CD8-positive, alpha-beta T cell (primary cell): ENCODE measurements at regions of chr9 and their contacts with region 1.

Region 1: GRCh38 chr9:86282077-86282978 is at the start of gene ISCA1:
- DNase-seq: peak; percentile 97 to 100 (median 99)
- ATAC-seq: peak; percentile 82
- H3K4me3 ChIP-seq: peak within 1 kb of the TSS; percentile 62 to 69
- H3K4me3 Mint-ChIP-seq: peak within 1 kb of the TSS; percentile 90
- H3K27ac ChIP-seq: peak within 1 kb of the TSS; percentile 87 to 89
- H3K27ac Mint-ChIP-seq: peak within 1 kb of the TSS; percentile 94
- H3K4me1 ChIP-seq: peaks cover 32% of the 10 kb centered on the region
- H3K4me1 Mint-ChIP-seq: peaks cover 44% of the 10 kb centered on the region
- H3K27me3 ChIP-seq: no peaks in the 10 kb centered on the region
- H3K27me3 Mint-ChIP-seq: no peaks in the 10 kb centered on the region
- CTCF ChIP-seq: no peak
- total RNA-seq, gene ISCA1: 116 to 119 TPM

Region 2: GRCh38 chr9:85741875-85742629 is 540.3 kb before region 1 on chr9 and contains the start of gene AGTPBP1:
- CTCF ChIA-PET with region 1: no interaction called
- POLR2A ChIA-PET with region 1: interaction called, 6 read pairs
- intact Hi-C with region 1: loop called (anchors 2 kb)
- DNase-seq: peak; percentile 90 to 99 (median 97)
- ATAC-seq: peak; percentile 85
- H3K4me3 ChIP-seq: peak within 1 kb of the TSS; percentile 78 to 89
- H3K4me3 Mint-ChIP-seq: peak within 1 kb of the TSS; percentile 96
- H3K27ac ChIP-seq: peak within 1 kb of the TSS; percentile 83 to 93
- H3K27ac Mint-ChIP-seq: peak within 1 kb of the TSS; percentile 98
- H3K4me1 ChIP-seq: peaks cover 12% of the 10 kb centered on the region
- H3K4me1 Mint-ChIP-seq: peaks cover 40% of the 10 kb centered on the region
- H3K27me3 ChIP-seq: no peaks in the 10 kb centered on the region
- H3K27me3 Mint-ChIP-seq: no peaks in the 10 kb centered on the region
- CTCF ChIP-seq: no peak
- total RNA-seq, gene AGTPBP1: 58.3 to 58.4 TPM

Region 3: DNA sequence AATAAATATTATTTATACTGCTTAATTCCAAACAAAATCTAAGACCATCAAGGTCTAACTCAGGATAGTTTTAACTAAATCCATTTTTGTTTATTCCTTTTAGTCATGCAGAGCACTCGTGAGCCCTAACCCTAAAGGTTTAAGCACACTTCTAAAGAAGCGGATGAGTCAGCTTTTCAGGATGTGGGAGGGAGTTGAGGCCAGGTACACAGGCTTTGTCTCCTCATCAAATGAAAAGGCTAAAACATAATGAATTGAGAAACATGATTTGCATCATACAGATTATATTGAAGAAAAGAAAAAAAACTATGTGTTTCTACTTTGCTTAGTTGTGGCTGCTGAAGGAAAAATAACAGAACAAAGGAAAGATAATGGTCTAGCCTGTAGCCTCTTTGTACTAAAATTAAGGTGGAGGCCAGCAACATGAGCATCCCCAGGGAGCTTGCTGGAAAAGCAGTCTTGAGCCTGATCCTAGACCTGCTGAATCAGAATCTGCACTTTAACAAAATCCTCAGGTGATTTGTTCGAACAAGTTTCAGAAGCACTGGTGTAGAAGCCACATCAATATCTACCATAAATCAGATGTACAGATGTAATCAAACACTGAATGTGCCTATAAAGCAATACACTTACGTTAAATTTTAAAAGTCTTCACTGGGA is 21.1 kb after region 1 on chr9:
- CTCF ChIA-PET with region 1: no interaction called
- POLR2A ChIA-PET with region 1: interaction called, 7 read pairs
- intact Hi-C with region 1: loop called (anchors 1 to 2 kb)
- DNase-seq: peak in 8 of 9 experiments; percentile 7 to 56 (median 42)
- ATAC-seq: peak; percentile 95
- H3K4me3 ChIP-seq: no peak overlapping the region
- H3K4me3 Mint-ChIP-seq: no peak overlapping the region
- H3K27ac ChIP-seq: no peak overlapping the region
- H3K27ac Mint-ChIP-seq: peak overlapping the region; percentile 72
- H3K4me1 ChIP-seq: peaks cover 8% of the 10 kb centered on the region
- H3K4me1 Mint-ChIP-seq: peaks cover 17% of the 10 kb centered on the region
- H3K27me3 ChIP-seq: no peaks in the 10 kb centered on the region
- H3K27me3 Mint-ChIP-seq: no peaks in the 10 kb centered on the region
- CTCF ChIP-seq: no peak

Region 4: GRCh38 chr9:86337469-86338108 is 55.3 kb after region 1 on chr9:
- CTCF ChIA-PET with region 1: no interaction called
- POLR2A ChIA-PET with region 1: no interaction called
- intact Hi-C with region 1: loop called in 1 of 2 experiments (anchors 5 kb)
- DNase-seq: peak in 2 of 9 experiments; percentile 42 to 67
- ATAC-seq: peak; percentile 39
- H3K4me3 ChIP-seq: peak overlapping the region; percentile 34 to 36
- H3K4me3 Mint-ChIP-seq: peak overlapping the region; percentile 83
- H3K27ac ChIP-seq: peak overlapping the region; percentile 35 to 68
- H3K27ac Mint-ChIP-seq: peak overlapping the region; percentile 87
- H3K4me1 ChIP-seq: peaks cover 18% of the 10 kb centered on the region
- H3K4me1 Mint-ChIP-seq: peaks cover 44% of the 10 kb centered on the region
- H3K27me3 ChIP-seq: no peaks in the 10 kb centered on the region
- H3K27me3 Mint-ChIP-seq: no peaks in the 10 kb centered on the region
- CTCF ChIP-seq: no peak

Region 5: GRCh38 chr9:86405926-86406325 is 123.6 kb after region 1 on chr9:
- CTCF ChIA-PET with region 1: no interaction called
- POLR2A ChIA-PET with region 1: no interaction called
- intact Hi-C with region 1: no loop called
- DNase-seq: no peak
- ATAC-seq: no peak
- H3K4me3 ChIP-seq: no peak overlapping the region
- H3K4me3 Mint-ChIP-seq: no peak overlapping the region
- H3K27ac ChIP-seq: no peak overlapping the region
- H3K27ac Mint-ChIP-seq: no peak overlapping the region
- H3K4me1 ChIP-seq: no peaks in the 10 kb centered on the region
- H3K4me1 Mint-ChIP-seq: no peaks in the 10 kb centered on the region
- H3K27me3 ChIP-seq: no peaks in the 10 kb centered on the region
- H3K27me3 Mint-ChIP-seq: peaks cover 24% of the 10 kb centered on the region
- CTCF ChIP-seq: no peak

Region 6: GRCh38 chr9:86948074-86948929 is 666.0 kb after region 1 on chr9:
- CTCF ChIA-PET with region 1: no interaction called
- POLR2A ChIA-PET with region 1: no interaction called
- intact Hi-C with region 1: loop called (anchors 5 to 10 kb)
- DNase-seq: peak; percentile 48 to 86 (median 71)
- ATAC-seq: peak; percentile 70
- H3K4me3 ChIP-seq: peak overlapping the region; percentile 52 to 79
- H3K4me3 Mint-ChIP-seq: peak overlapping the region; percentile 88
- H3K27ac ChIP-seq: no peak overlapping the region
- H3K27ac Mint-ChIP-seq: no peak overlapping the region
- H3K4me1 ChIP-seq: peaks cover 5% of the 10 kb centered on the region
- H3K4me1 Mint-ChIP-seq: peaks cover 18% of the 10 kb centered on the region
- H3K27me3 ChIP-seq: peaks cover 2 to 8% of the 10 kb centered on the region in 2 experiments
- H3K27me3 Mint-ChIP-seq: peaks cover 22% of the 10 kb centered on the region
- CTCF ChIP-seq: peak; percentile 80